Posterior vena cava (tissue), 2 donors: ENCODE measurements at regions of chr10 and their contacts with region 1.

Region 1: DNA sequence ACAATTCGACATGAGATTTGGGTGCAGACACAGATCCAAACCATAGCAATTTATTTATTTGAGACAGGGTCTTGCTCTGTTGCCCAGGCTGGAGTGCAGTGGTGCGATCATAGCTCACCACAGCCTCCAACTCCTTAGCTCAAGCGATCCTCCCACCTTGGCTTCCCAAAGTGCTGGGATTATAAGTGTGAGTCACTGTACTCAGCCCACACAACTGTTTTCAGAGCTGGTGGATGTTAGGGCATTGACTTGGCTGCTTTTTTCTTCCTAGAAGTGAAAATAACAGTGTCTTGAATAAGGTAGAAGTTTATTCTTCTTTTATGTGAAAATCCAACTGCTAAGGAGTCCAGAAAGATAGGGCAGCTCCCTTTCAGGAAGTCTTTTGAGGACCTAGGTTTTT is 132.1 kb downstream of the CCDC3 start:
- DNase-seq: no peak

Region 2: DNA sequence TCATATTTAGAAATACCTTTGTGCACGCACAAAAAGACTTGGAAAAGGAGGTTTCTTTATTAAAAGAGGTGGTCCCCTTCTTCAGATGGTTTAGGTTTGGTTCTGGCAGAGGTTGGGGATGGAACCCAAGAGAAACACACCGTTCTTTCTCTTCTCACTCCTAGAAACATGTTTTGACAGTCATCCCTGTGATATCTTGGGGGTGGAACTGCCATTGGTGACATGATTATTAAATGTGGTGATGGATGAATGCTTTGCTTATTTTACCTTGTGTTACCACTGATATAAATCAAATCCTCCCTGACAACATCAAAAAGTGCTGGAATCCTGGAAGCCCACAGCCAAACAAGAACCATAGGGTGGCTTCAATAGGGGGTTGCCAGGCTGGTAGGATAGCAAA is 14.4 kb before region 1 on chr10:
- intact Hi-C with region 1: no loop called
- DNase-seq: no peak

Region 3: DNA sequence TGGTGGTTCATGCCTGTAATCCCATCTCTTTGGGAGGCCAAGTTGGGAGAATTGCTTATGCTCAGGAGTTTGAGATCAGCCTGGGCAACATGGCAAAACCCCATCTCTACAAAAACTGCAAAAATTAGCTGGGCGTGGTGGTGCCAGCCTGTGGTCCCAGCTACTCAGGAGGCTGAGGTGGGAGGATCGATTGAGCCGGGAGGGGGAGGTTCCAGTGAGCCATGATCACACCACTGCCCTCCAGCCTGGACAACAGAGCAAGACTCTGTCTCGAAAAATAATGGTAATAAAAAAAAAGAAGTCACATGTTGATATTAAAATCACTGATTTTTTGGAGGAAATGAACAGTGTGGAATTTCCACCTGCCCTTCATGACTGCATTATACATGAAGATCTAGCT is 414.6 kb after region 1 on chr10:
- intact Hi-C with region 1: loop called in 1 of 2 experiments (anchors 10 kb)
- DNase-seq: peak; percentile 12

Region 4: DNA sequence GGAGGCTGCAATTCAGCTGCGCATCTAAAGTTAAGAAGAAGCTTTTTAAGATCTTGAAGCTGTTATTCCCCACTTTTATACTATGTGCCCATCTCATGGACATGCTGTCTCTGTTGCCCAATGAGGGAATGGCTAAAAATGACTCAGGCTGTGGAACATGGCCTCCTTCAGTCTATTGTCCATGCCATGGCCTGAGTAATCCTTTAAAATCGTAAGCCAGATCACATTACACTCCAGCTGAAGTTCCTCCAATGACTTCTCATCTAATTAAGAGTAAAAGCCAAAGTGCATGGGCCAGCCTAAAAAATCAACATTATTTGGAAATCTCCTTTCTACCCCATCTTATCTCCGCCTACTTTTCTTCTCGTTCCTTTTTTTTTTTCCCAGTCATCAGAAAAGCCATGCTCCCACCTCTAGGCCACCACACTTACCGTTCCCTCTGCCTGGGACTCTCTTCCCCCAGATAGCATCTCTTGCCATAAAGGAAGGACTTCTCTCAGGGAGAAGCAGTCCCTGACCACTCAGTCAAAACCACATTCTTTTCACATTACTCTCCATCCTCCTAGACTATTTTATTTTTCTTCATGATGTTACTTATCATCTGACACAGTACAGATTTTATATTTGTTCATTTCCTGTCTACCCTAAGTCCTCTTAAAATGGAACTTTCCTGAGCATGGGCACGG is 1054.8 kb after region 1 on chr10:
- intact Hi-C with region 1: loop called in 1 of 2 experiments (anchors 10 kb)
- DNase-seq: no peak